CD8-positive, alpha-beta T cell (primary cell): ENCODE measurements at regions of chr12 and their contacts with region 1.

Region 1: DNA sequence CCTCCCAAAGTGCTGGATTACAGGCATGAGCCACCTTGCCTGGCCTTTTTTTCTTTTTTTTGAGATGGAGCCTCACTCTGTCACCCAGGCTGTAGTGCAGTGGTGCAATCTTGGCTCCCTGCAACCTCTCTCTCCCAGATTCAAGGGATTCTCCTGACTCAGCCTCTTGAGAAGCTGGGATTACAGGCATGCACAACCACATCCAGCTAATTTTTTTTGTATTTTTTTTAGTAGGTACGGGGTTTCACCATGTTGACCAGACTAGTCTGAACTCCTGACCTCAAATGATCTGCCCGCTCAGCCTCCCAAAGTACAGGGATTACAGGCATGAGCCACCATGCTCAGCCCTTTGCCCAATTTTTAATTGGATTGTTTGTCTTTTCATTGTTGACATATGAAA is 58.0 kb downstream of the SINHCAF start:
- DNase-seq: no peak
- ATAC-seq: no peak
- H3K4me3 ChIP-seq: no peak overlapping the region
- H3K4me3 Mint-ChIP-seq: no peak overlapping the region
- H3K27ac ChIP-seq: no peak overlapping the region
- H3K27ac Mint-ChIP-seq: no peak overlapping the region
- H3K4me1 ChIP-seq: no peaks in the 10 kb centered on the region
- H3K4me1 Mint-ChIP-seq: peaks cover 3% of the 10 kb centered on the region
- H3K27me3 ChIP-seq: no peaks in the 10 kb centered on the region
- H3K27me3 Mint-ChIP-seq: no peaks in the 10 kb centered on the region
- CTCF ChIP-seq: no peak

Region 2: GRCh38 chr12:31106101-31106803 is 161.7 kb before region 1 on chr12:
- CTCF ChIA-PET with region 1: no interaction called
- POLR2A ChIA-PET with region 1: no interaction called
- intact Hi-C with region 1: loop called in 1 of 2 experiments (anchors 5 kb)
- DNase-seq: no peak
- ATAC-seq: no peak
- H3K4me3 ChIP-seq: no peak overlapping the region
- H3K4me3 Mint-ChIP-seq: no peak overlapping the region
- H3K27ac ChIP-seq: no peak overlapping the region
- H3K27ac Mint-ChIP-seq: no peak overlapping the region
- H3K4me1 ChIP-seq: no peaks in the 10 kb centered on the region
- H3K4me1 Mint-ChIP-seq: no peaks in the 10 kb centered on the region
- H3K27me3 ChIP-seq: no peaks in the 10 kb centered on the region
- H3K27me3 Mint-ChIP-seq: no peaks in the 10 kb centered on the region
- CTCF ChIP-seq: no peak

Region 3: GRCh38 chr12:31491819-31492598 is 224.0 kb after region 1 on chr12:
- CTCF ChIA-PET with region 1: no interaction called
- POLR2A ChIA-PET with region 1: no interaction called
- intact Hi-C with region 1: no loop called
- DNase-seq: no peak
- ATAC-seq: no peak
- H3K4me3 ChIP-seq: no peak overlapping the region
- H3K4me3 Mint-ChIP-seq: no peak overlapping the region
- H3K27ac ChIP-seq: no peak overlapping the region
- H3K27ac Mint-ChIP-seq: no peak overlapping the region
- H3K4me1 ChIP-seq: no peaks in the 10 kb centered on the region
- H3K4me1 Mint-ChIP-seq: no peaks in the 10 kb centered on the region
- H3K27me3 ChIP-seq: no peaks in the 10 kb centered on the region
- H3K27me3 Mint-ChIP-seq: peaks cover 5% of the 10 kb centered on the region
- CTCF ChIP-seq: no peak